Spleen (tissue), 13 donors: ENCODE measurements at regions of chr1 and their contacts with region 1.

Region 1: DNA sequence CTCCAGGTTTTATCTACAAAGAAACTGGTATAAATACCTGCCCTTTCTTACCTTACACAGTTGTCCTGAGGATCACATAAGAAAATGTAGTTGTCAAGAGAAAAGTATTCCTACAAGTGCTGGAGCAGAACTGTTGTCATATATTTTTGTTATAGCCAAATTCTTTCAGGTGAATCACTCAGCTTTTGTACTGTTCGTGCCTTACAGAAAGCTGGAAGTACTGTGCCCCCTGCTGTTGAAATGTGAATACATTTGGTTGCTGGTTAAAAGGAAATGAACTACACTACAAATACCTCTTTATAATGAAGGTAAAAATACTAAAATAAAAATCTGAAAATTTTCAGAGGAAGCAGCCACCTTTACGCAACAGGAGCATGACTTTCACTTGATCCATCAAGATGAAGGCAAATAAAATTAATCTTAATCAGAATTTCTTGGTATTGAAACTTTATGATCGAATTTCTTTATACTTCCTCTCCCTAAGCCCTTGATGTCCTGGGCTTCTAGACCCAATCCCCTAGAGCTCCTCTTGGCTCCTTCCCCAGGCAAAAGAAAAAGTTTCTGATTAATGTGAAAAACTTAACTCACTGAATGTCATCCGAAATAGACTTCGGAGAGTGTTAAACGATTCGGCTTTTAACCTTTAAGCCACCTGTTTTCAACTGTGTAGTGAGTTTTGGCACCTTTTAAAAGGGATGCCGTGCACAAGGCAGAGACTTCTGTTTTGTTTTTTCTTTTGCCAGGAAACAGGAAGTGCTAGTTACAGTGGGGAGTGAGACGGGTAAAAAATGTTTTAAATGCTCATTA is 12.5 kb downstream of the CHML start:
- DNase-seq: no peak
- H3K4me3 ChIP-seq: peak overlapping the region in 1 of 8 donors; percentile 37
- H3K27ac ChIP-seq: peak overlapping the region in 7 of 8 donors; percentile 9 to 74 (median 41)
- H3K4me1 ChIP-seq: peaks cover 0 to 26% (median 14%) of the 10 kb centered on the region in 6 donors
- H3K27me3 ChIP-seq: no peaks in the 10 kb centered on the region
- CTCF ChIP-seq: peak in 10 of 11 experiments; percentile 19 to 72 (median 52)
- POLR2A ChIP-seq: no peak

Region 2: DNA sequence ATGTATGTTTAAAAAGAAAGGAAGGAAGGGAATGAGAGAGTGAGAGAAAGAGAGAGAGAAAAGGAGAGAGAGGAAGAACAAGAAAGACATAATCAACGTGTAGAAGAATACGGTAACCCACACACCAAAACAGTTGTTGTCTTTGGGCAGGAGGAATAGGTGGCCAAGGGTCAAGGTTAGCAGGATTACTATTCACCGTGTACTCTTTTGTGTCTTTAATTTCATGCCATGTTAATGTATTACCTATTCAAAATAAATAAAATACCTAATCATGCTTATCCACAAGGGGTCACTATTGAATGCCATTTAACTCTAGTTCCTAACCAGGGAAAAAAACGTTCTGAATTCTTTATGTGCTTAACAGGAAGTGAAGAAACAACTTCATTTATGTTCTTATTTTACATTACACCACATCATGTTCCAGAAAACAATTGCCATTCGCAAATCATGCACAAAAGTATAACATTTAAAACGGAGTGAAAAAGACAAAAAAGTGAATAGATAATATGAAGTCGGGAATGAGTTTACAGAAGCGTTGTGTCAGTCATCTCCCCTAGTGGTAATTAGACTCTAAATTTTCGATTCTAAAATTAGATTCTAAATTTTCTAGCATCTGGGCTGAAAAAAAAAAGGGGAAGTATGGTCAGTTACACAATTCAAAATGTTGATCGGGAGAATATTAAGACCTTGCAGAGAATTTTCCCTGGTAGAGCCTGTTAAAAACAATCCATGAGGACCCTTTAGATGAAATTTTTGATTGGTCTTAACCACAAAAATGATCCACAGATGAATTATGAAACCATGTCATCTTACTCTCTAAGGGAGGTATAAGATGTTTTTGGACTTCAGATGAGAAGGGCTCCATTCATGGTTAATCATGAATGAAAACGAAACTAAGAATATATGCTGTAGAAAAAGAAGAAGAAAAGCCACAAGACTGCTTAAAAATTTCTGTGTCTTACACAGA is 96.2 kb before region 1 on chr1:
- intact Hi-C with region 1: loop called (anchors 10 kb)
- DNase-seq: no peak
- H3K4me3 ChIP-seq: peak overlapping the region; percentile 32 to 70 (median 42)
- H3K27ac ChIP-seq: peak overlapping the region; percentile 24 to 86 (median 83)
- H3K4me1 ChIP-seq: peaks cover 0 to 47% (median 10%) of the 10 kb centered on the region in 6 donors
- H3K27me3 ChIP-seq: no peaks in the 10 kb centered on the region
- CTCF ChIP-seq: peak in 10 of 11 experiments; percentile 20 to 79 (median 63)
- POLR2A ChIP-seq: no peak